ENCODE measurements at regions of chr11 and their contacts with region 1.

Region 1: DNA sequence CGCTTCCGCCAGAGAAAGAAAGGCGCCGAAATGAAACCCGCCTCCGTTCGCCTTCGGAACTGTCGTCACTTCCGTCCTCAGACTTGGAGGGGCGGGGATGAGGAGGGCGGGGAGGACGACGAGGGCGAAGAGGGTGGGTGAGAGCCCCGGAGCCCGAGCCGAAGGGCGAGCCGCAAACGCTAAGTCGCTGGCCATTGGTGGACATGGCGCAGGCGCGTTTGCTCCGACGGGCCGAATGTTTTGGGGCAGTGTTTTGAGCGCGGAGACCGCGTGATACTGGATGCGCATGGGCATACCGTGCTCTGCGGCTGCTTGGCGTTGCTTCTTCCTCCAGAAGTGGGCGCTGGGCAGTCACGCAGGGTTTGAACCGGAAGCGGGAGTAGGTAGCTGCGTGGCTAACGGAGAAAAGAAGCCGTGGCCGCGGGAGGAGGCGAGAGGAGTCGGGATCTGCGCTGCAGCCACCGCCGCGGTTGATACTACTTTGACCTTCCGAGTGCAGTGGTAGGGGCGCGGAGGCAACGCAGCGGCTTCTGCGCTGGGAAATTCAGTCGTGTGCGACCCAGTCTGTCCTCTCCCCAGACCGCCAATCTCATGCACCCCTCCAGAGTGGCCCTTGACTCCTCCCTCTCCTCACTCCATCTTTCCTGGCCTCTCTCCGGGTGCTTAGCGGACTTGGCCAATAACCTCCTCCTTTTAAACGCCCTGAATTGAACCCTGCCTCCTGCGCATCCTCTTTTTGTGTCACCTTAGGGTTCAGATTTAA is at the start of gene ATM:
- DNase-seq: peak; percentile 97
- ATAC-seq: peak; percentile 92
- H3K4me3 ChIP-seq: peak within 1 kb of the TSS; percentile 86 to 91 (median 88)
- H3K27ac ChIP-seq: peak within 1 kb of the TSS; percentile 96
- H3K4me1 ChIP-seq: peaks cover 50% of the 10 kb centered on the region
- H3K27me3 ChIP-seq: peaks cover 0 to 2% of the 10 kb centered on the region in 2 experiments; a peak in 1 of 5 replicates
- CTCF ChIP-seq: peak; percentile 98
- EP300 ChIP-seq: no peak
- POLR2A ChIP-seq: peak; percentile 87 to 92
- RAD21 ChIP-seq: peak; percentile 85
- total RNA-seq, gene ATM: 61.1 and 71.6 TPM in 2 replicates

Region 2: GRCh38 chr11:108008656-108009496 is 214.0 kb before region 1 on chr11 and contains the start of gene CUL5:
- CTCF ChIA-PET with region 1: no interaction called
- POLR2A ChIA-PET with region 1: interaction called, 11 read pairs
- in situ Hi-C with region 1: no loop called
- intact Hi-C with region 1: no loop called
- DNase-seq: peak; percentile 85
- ATAC-seq: peak; percentile 96
- H3K4me3 ChIP-seq: peak within 1 kb of the TSS; percentile 87 to 99 (median 97)
- H3K27ac ChIP-seq: peak within 1 kb of the TSS; percentile 99
- H3K4me1 ChIP-seq: peaks cover 37% of the 10 kb centered on the region
- H3K27me3 ChIP-seq: no peaks in the 10 kb centered on the region
- CTCF ChIP-seq: peak; percentile 95
- EP300 ChIP-seq: peak in 1 of 2 experiments; percentile 75; a peak in 2 of 4 replicates
- POLR2A ChIP-seq: peak; percentile 85 to 98
- RAD21 ChIP-seq: peak; percentile 80
- total RNA-seq, gene CUL5: 24.7 and 35.5 TPM in 2 replicates

Region 3: DNA sequence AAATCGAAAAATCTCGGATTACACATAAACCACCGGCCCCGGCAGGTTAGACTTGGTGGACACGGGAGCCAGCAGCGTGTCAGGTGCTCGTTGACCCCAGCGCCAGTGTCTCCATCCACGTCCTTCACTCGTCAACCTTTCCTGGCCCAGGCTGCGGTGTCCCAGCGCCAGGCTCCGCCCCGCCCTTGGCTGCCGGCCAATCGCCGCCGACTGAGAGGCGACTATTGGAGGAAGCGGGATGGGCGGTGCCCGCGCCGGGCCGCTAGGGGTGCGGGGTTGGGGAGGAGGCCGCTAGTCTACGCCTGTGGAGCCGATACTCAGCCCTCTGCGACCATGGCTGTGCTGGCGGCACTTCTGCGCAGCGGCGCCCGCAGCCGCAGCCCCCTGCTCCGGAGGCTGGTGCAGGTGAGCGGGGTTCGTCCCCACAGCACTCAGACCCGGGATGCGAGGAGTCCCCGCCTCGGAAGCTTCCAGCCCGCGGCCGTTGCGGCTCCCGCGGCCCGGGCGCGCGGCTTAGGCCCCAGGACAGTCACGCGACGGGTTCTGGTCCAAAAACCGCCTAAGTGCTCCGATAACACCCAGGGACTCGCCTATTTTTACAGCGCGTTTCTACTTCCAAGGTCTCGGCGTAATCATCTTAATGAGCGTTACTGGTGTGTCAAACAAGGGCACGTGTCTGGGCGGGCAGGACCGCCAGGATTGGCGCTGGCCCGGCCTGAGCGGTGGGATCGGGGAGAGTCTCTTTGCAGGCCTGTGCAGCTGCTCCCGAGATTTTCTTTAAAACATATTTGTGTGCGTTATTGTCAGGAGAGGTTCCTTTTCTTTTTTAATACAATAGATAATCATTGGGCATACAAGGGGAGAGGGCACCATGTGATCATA is 101.4 kb before region 1 on chr11 and contains the start of gene ACAT1:
- CTCF ChIA-PET with region 1: no interaction called
- POLR2A ChIA-PET with region 1: no interaction called
- in situ Hi-C with region 1: no loop called
- intact Hi-C with region 1: loop called (anchors 5 kb)
- DNase-seq: peak; percentile 91
- ATAC-seq: peak; percentile 97
- H3K4me3 ChIP-seq: peak within 1 kb of the TSS; percentile 77 to 85 (median 82)
- H3K27ac ChIP-seq: peak within 1 kb of the TSS; percentile 82
- H3K4me1 ChIP-seq: peaks cover 37% of the 10 kb centered on the region
- H3K27me3 ChIP-seq: no peaks in the 10 kb centered on the region; a peak in 1 of 5 replicates
- CTCF ChIP-seq: peak; percentile 45; the same call in 1 of the 2 replicates
- EP300 ChIP-seq: no peak
- POLR2A ChIP-seq: peak; percentile 89 to 95
- RAD21 ChIP-seq: peak; percentile 45; the same call in 1 of the 2 replicates
- total RNA-seq, gene ACAT1: 165 and 181 TPM in 2 replicates

Region 4: GRCh38 chr11:108233277-108233945 is 10.5 kb after region 1 on chr11:
- CTCF ChIA-PET with region 1: no interaction called
- POLR2A ChIA-PET with region 1: interaction called, 56 read pairs
- in situ Hi-C with region 1: no loop called
- intact Hi-C with region 1: loop called (anchors 1 kb)
- DNase-seq: peak; percentile 81
- ATAC-seq: peak; percentile 99
- H3K4me3 ChIP-seq: no peak overlapping the region; a peak in 1 of 6 replicates
- H3K27ac ChIP-seq: peak overlapping the region; percentile 83
- H3K4me1 ChIP-seq: peaks cover 37% of the 10 kb centered on the region
- H3K27me3 ChIP-seq: no peaks in the 10 kb centered on the region
- CTCF ChIP-seq: no peak
- EP300 ChIP-seq: peak in 1 of 2 experiments; percentile 71; a peak in 2 of 4 replicates
- POLR2A ChIP-seq: no peak
- RAD21 ChIP-seq: no peak

Region 5: GRCh38 chr11:108647701-108648527 is 425.0 kb after region 1 on chr11:
- CTCF ChIA-PET with region 1: no interaction called
- POLR2A ChIA-PET with region 1: no interaction called
- in situ Hi-C with region 1: no loop called
- intact Hi-C with region 1: loop called (anchors 5 kb)
- DNase-seq: peak; percentile 50
- ATAC-seq: peak; percentile 98
- H3K4me3 ChIP-seq: no peak overlapping the region
- H3K27ac ChIP-seq: no peak overlapping the region
- H3K4me1 ChIP-seq: no peaks in the 10 kb centered on the region
- H3K27me3 ChIP-seq: no peaks in the 10 kb centered on the region
- CTCF ChIP-seq: peak; percentile 92
- EP300 ChIP-seq: no peak
- POLR2A ChIP-seq: no peak
- RAD21 ChIP-seq: peak; percentile 80

Measured in HepG2 (cell line).